Dendritic cell treated with granulocyte-macrophage colony-stimulating factor and Interleukin-4, amounts not matched to agents 40 ng/mL and 50 ng/mL, for 4 days (primary cell): ENCODE measurements at regions of chr13 and their contacts with region 1.

Region 1: GRCh38 chr13:95403828-95404522 is 102.7 kb upstream of the ABCC4 start:
- H3K4me3 Mint-ChIP-seq: peak overlapping the region; percentile 58
- H3K27ac Mint-ChIP-seq: no peak overlapping the region
- H3K4me1 Mint-ChIP-seq: peaks cover 19% of the 10 kb centered on the region
- H3K27me3 Mint-ChIP-seq: peaks cover 17% of the 10 kb centered on the region

Region 2: DNA sequence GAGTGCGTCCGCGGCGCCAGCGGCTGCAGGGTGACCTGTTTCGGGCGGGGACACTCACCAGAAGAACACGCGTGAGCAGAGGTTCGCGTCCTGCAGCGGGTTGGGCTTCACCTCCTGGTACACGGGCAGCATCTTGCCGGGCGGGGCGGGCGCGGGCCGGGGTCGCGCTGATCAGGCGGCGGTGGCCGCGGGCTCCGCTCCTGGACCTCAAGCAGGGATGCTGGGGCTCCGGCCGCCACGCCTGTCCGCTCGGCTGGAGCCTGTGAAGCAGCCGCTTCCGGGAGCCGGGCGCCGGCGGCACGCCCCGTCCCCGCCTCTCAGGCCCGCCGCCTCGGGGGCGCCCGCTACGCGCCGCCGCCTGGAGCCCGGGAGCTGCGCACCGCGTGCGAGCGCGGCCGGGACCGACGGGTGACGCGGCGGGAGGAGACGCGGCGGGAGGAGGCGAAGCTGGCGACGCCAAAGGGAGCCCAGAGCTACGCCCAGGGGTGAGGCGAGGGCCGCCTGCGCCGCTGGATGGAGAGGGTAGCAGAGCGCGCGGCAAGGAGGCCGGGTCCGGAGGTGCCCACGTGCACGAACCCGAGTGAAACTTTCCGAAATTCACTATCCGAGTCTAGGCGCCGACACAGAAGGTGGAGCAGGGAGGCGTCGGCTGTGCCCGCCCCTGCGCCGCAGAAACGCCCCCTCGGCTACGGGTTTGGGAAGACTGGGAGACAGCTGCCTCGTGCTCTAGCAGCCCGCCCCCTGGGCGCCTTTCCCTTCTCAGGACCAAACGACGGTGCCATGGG is 102.6 kb before region 1 on chr13 and contains the start of gene ABCC4:
- intact Hi-C with region 1: loop called (anchors 2 kb)
- H3K4me3 Mint-ChIP-seq: peak within 1 kb of the TSS; percentile 80
- H3K27ac Mint-ChIP-seq: peak within 1 kb of the TSS; percentile 75
- H3K4me1 Mint-ChIP-seq: peaks cover 36% of the 10 kb centered on the region
- H3K27me3 Mint-ChIP-seq: peaks cover 12% of the 10 kb centered on the region

Region 3: DNA sequence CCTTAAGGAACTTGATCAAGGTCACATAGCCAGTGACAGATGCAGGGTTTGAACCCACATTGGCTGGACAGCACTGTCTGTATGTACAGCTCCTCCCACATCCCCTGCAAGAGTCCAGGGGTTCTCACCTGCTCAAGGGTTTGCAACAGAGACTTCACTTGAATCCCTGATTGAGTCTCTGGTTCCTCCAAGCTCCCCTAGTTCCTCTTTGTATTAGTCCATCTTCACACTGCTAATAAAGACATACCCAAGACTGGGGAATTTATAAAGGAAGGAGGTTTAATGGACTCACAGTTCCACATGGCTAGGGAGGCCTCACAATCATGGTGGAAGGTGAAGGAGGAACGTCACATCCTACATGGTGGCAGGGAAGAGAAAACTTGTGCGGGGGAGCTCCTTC is 75.8 kb after region 1 on chr13:
- intact Hi-C with region 1: loop called (anchors 5 kb)
- H3K4me3 Mint-ChIP-seq: peak overlapping the region; percentile 30
- H3K27ac Mint-ChIP-seq: peak overlapping the region; percentile 88
- H3K4me1 Mint-ChIP-seq: peaks cover 28% of the 10 kb centered on the region
- H3K27me3 Mint-ChIP-seq: peaks cover 14% of the 10 kb centered on the region